Gastrocnemius medialis (tissue), 4 donors: ENCODE measurements at regions of chr7 and their contacts with region 1.

Region 1: DNA sequence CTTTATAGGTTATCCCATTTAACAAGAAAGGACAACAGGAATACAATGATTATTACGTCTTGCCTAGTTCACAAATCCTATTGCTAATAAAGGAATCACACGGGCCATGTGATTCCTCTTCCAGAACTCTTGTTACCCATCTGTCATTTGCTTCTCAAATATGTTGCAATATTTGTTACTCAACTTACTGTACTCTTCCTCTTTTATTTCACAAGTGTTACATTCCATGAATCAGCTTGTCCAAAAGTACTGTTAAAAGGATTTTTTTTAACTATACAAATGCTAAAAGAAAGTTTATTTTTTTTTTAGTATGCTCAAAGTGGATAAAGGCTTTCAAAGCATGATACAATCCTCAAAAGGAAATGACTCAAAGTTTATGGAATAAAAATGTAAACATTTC is 3.9 kb upstream of the CD36 start:
- DNase-seq: no peak
- ATAC-seq: peak; percentile 80 to 86
- H3K4me3 ChIP-seq: no peak overlapping the region
- H3K27ac ChIP-seq: peak overlapping the region; percentile 82 to 92 (median 86)
- H3K4me1 ChIP-seq: peaks cover 62 to 68% of the 10 kb centered on the region in 2 donors
- H3K27me3 ChIP-seq: no peaks in the 10 kb centered on the region
- CTCF ChIP-seq: no peak
- POLR2A ChIP-seq: no peak

Region 2: DNA sequence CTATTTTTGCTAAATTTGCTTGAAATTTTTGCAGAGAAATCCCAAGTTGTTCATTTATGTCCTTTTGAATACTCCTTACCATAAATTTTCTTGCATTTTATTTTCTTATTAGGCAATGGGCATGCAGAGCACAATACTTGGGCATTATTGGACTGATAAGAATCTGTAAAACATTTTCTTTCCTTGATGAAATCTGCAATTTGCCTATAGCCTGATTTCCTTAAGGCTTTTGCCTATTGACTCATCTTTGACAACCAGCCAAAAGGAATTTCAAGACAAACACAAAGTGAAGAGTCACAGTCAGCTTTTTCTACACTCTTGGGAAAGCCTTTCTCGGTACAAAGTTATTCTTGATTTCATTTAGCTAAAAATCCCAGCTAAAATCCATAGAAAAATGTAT is 92.1 kb before region 1 on chr7:
- in situ Hi-C with region 1: no loop called
- intact Hi-C with region 1: no loop called
- DNase-seq: no peak
- ATAC-seq: no peak
- H3K4me3 ChIP-seq: no peak overlapping the region
- H3K27ac ChIP-seq: peak overlapping the region in 1 of 4 donors; percentile 25
- H3K4me1 ChIP-seq: peaks cover 0 to 11% of the 10 kb centered on the region in 2 donors
- H3K27me3 ChIP-seq: no peaks in the 10 kb centered on the region
- CTCF ChIP-seq: no peak
- POLR2A ChIP-seq: no peak

Region 3: DNA sequence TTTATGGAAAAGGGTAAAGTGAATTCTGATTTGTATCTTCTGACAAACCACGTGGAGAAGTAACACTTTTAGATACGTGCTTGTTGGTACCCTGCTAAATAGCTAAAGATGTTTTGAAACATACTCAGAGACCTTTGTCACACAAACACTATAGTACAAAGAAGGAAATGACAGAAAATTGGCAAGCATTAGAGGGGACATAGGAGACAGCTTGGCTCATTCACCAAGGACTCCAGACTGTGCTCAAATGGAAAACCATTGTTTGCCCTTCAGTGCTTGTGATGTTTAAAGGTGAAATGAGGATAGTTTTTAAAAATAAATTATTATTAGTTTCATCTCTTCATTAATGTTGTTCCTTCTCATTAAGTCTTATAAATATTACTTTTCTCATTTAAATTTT is 30.1 kb before region 1 on chr7:
- in situ Hi-C with region 1: no loop called
- intact Hi-C with region 1: loop called (anchors 5 kb)
- DNase-seq: no peak
- ATAC-seq: peak; percentile 53 to 72
- H3K4me3 ChIP-seq: peak overlapping the region in 3 of 4 donors; percentile 12 to 48 (median 12)
- H3K27ac ChIP-seq: peak overlapping the region; percentile 80 to 87 (median 84)
- H3K4me1 ChIP-seq: peaks cover 52 to 76% of the 10 kb centered on the region in 2 donors
- H3K27me3 ChIP-seq: no peaks in the 10 kb centered on the region
- CTCF ChIP-seq: no peak
- POLR2A ChIP-seq: peak in 1 of 2 donors; percentile 12